PC-9 (cell line): ENCODE measurements at regions of chr7 and their contacts with region 1.

Region 1: DNA sequence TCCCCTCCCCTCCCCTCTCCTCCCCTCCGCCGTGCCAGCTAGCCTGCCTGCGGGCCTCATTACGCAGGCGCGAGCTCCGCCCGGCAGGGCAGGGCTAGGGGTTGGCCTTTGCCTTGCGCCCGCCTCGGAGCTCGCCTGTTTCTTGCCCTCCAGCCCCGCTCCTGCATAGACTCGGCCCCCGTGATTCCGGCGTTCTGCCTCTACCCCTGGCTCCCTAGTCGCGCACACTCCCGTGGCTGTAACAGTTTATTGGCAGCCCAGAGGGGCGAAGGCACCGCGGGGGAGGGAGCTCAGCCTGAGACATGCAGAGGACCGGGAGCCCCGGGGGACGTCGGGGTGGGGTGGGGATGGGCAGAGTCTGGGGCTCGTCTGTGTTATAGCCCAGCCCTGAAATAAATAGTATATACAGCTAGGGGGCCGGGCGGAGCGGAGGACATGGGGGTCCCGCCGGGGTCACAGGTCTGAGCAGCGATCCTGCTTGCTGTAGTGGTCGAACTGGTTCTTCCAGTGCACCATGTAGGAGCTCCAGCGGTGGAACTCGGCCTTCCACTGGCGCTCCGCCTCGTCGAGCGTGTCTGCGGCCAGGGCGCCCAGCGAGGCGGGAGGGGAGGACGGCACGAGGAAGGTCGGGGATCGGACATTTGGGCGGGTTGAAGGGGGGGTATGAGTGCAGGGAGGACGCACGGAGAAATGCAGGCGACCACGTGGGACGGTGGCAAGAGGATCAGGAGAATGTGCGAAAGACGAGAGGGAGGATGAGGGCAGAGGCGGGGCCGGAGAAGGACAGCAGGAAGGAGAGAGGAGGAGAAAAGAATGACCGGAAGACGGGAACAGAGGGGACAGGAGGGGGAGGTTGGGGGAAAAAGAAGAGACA is 483 bp upstream of the UFSP1 start:
- DNase-seq: peak; percentile 77 to 96
- H3K4me3 ChIP-seq: peak overlapping the region; percentile 77
- H3K27ac ChIP-seq: peak overlapping the region; percentile 90
- H3K4me1 ChIP-seq: peaks cover 26% of the 10 kb centered on the region
- H3K27me3 ChIP-seq: 0 out of 2 replicates have a peak, but pooled peaks cover under 1% of the 10 kb centered on the region
- CTCF ChIP-seq: no peak

Region 2: DNA sequence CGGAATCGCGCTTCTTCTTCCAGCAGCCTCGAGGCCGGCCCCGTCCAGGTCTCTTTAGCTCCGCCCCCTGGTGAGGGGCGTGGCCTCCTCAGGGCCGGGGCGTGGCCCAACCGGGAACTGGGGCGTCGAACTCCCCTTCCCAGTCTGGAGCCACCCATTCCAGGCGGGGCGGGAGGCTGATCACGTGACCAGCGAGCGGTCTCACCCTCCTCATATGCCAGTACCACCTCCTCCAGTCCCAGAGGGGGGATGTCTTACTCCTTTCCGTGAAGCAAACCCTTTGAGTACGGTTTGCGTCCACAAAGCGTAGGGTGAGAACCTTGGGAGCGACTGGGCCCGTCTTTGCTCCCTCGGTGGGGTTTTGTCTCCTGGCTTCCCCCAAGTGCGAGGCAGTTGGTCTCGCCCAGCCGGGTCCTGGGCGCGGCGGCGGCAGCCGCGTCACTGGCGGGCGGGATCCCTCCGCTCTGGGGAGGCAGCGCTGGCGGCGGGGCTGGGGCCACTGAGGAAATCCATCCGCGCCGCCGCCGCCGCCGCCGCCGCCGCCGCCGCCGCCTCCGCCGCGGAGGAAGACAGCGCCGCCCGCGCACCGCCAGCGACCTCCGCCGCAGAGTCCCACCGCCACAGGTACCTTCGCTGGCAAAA is 216.6 kb before region 1 on chr7 and contains the start of gene GNB2:
- CTCF ChIA-PET with region 1: no interaction called
- POLR2A ChIA-PET with region 1: no interaction called
- intact Hi-C with region 1: loop called (anchors 1 kb)
- DNase-seq: peak; percentile 93 to 100
- H3K4me3 ChIP-seq: peak within 1 kb of the TSS; percentile 99
- H3K27ac ChIP-seq: peak within 1 kb of the TSS; percentile 75
- H3K4me1 ChIP-seq: no peaks in the 10 kb centered on the region; the same call in 1 of the 2 replicates
- H3K27me3 ChIP-seq: no peaks in the 10 kb centered on the region
- CTCF ChIP-seq: no peak
- total RNA-seq, gene GNB2: 299 and 326 TPM in 2 replicates

Region 3: GRCh38 chr7:100827330-100828227 is 62.4 kb before region 1 on chr7 and contains the start of gene EPHB4:
- CTCF ChIA-PET with region 1: interaction called, 12 read pairs
- POLR2A ChIA-PET with region 1: interaction called, 3 read pairs
- intact Hi-C with region 1: loop called (anchors 5 kb)
- DNase-seq: peak in 1 of 2 experiments; percentile 85
- H3K4me3 ChIP-seq: peak within 1 kb of the TSS; percentile 68
- H3K27ac ChIP-seq: no peak within 1 kb of the TSS
- H3K4me1 ChIP-seq: peaks cover 12% of the 10 kb centered on the region; the same call in 1 of the 2 replicates
- H3K27me3 ChIP-seq: no peaks in the 10 kb centered on the region
- CTCF ChIP-seq: no peak; the same call in 1 of the 2 replicates
- total RNA-seq, gene EPHB4: 79.4 and 94.6 TPM in 2 replicates

Region 4: GRCh38 chr7:100874577-100875355 is 15.2 kb before region 1 on chr7 and contains the start of gene SRRT:
- CTCF ChIA-PET with region 1: interaction called, 5 read pairs
- POLR2A ChIA-PET with region 1: interaction called, 24 read pairs
- intact Hi-C with region 1: no loop called
- DNase-seq: peak; percentile 91 to 98
- H3K4me3 ChIP-seq: peak within 1 kb of the TSS; percentile 99
- H3K27ac ChIP-seq: peak within 1 kb of the TSS; percentile 86
- H3K4me1 ChIP-seq: peaks cover 19% of the 10 kb centered on the region
- H3K27me3 ChIP-seq: no peaks in the 10 kb centered on the region
- CTCF ChIP-seq: peak; percentile 57
- total RNA-seq, gene SRRT: 116 and 144 TPM in 2 replicates

Region 5: GRCh38 chr7:100965723-100966541 is 75.9 kb after region 1 on chr7:
- CTCF ChIA-PET with region 1: no interaction called
- POLR2A ChIA-PET with region 1: no interaction called
- intact Hi-C with region 1: loop called (anchors 1 kb)
- DNase-seq: peak in 1 of 2 experiments; percentile 92
- H3K4me3 ChIP-seq: no peak overlapping the region
- H3K27ac ChIP-seq: no peak overlapping the region
- H3K4me1 ChIP-seq: no peaks in the 10 kb centered on the region
- H3K27me3 ChIP-seq: peaks cover 86% of the 10 kb centered on the region
- CTCF ChIP-seq: peak; percentile 46

Region 6: DNA sequence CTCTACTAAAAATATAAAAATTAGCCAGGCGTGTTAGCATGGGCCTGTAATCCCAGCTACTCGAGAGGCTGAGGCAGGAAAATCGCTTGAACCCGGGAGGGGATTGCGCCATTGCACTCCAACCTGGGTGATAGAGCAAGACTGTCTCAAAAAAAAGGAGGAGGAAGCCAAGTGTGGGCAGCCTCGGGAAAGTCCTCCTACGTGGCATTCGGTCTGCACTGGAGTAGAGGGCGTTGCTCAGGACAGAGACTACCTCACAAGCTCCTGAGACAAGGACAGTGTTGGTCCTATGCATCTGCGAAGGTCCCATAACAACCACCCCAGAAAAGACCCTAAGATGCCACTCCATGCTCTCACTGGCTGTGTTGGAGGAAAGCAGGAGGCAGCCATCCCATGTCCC is 226.9 kb after region 1 on chr7:
- CTCF ChIA-PET with region 1: no interaction called
- POLR2A ChIA-PET with region 1: interaction called, 10 read pairs
- intact Hi-C with region 1: no loop called
- DNase-seq: no peak
- H3K4me3 ChIP-seq: no peak overlapping the region
- H3K27ac ChIP-seq: peak overlapping the region; percentile 99
- H3K4me1 ChIP-seq: peaks cover 58% of the 10 kb centered on the region
- H3K27me3 ChIP-seq: no peaks in the 10 kb centered on the region
- CTCF ChIP-seq: no peak

Region 7: GRCh38 chr7:101287032-101287431 is 397.0 kb after region 1 on chr7:
- CTCF ChIA-PET with region 1: interaction called, 5 read pairs
- POLR2A ChIA-PET with region 1: no interaction called
- intact Hi-C with region 1: loop called (anchors 2 kb)
- DNase-seq: no peak
- H3K4me3 ChIP-seq: no peak overlapping the region
- H3K27ac ChIP-seq: no peak overlapping the region
- H3K4me1 ChIP-seq: no peaks in the 10 kb centered on the region
- H3K27me3 ChIP-seq: peaks cover 18% of the 10 kb centered on the region
- CTCF ChIP-seq: no peak

Region 8: GRCh38 chr7:101299511-101300464 is 409.8 kb after region 1 on chr7:
- CTCF ChIA-PET with region 1: no interaction called
- POLR2A ChIA-PET with region 1: no interaction called
- intact Hi-C with region 1: no loop called
- DNase-seq: no peak
- H3K4me3 ChIP-seq: no peak overlapping the region
- H3K27ac ChIP-seq: no peak overlapping the region
- H3K4me1 ChIP-seq: no peaks in the 10 kb centered on the region
- H3K27me3 ChIP-seq: peaks cover 16% of the 10 kb centered on the region
- CTCF ChIP-seq: no peak

Region 9: DNA sequence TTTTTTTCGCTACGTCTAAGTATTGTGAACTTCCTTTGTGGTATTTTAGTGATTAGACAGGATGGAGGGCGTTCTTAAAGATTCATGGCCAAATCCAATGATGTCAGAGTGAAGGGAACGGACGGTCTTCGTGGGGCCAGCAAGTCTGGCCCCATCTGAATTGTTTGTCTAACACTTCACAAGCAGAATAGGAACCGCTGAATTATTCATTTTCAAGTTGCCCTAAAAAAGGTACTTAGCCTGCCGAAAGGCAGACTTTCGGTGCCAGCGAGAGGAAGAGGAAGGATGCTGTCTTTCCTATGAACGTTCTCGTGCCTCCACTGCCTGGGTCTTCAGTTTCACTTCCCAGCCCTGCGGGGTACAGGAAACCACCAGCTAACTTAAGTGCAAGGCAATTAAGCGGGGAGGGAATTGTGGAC is 1251.0 kb after region 1 on chr7:
- CTCF ChIA-PET with region 1: no interaction called
- POLR2A ChIA-PET with region 1: no interaction called
- intact Hi-C with region 1: no loop called
- DNase-seq: no peak
- H3K4me3 ChIP-seq: no peak overlapping the region
- H3K27ac ChIP-seq: no peak overlapping the region
- H3K4me1 ChIP-seq: no peaks in the 10 kb centered on the region
- H3K27me3 ChIP-seq: no peaks in the 10 kb centered on the region
- CTCF ChIP-seq: no peak